ENCODE measurements at regions of chr22 and their contacts with region 1.

Region 1: GRCh38 chr22:27134315-27134701 is 476.9 kb downstream of the MIAT start:
- DNase-seq: no peak
- H3K4me3 ChIP-seq: no peak overlapping the region
- H3K27ac ChIP-seq: no peak overlapping the region
- H3K4me1 ChIP-seq: no peaks in the 10 kb centered on the region
- H3K27me3 ChIP-seq: no peaks in the 10 kb centered on the region
- CTCF ChIP-seq: no peak
- EP300 ChIP-seq: no peak
- POLR2A ChIP-seq: no peak
- RAD21 ChIP-seq: no peak

Region 2: DNA sequence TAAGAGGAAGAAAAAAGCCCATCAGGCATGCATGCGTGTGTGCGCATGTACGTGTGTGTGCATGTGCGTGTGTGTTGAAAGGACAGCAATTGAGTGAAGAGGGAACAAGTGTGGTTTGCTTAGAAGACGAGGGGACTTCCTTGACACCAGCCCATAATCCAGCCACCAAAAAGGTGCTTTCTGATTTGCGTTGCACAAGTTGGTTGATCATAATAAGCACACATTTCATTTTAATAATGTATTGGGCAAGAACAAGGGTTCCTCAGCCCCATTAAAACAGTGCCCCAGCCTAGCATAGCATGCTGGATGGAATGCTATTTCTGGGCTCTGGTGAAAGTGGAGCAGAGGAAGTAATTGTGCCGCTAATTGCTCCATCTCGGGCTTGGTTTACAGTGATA is 16.2 kb after region 1 on chr22:
- CTCF ChIA-PET with region 1: interaction called, 13 read pairs
- POLR2A ChIA-PET with region 1: interaction called, 3 read pairs
- DNase-seq: no peak
- H3K4me3 ChIP-seq: no peak overlapping the region
- H3K27ac ChIP-seq: no peak overlapping the region
- H3K4me1 ChIP-seq: no peaks in the 10 kb centered on the region; a peak in 1 of 7 replicates
- H3K27me3 ChIP-seq: no peaks in the 10 kb centered on the region
- CTCF ChIP-seq: no peak
- EP300 ChIP-seq: no peak
- POLR2A ChIP-seq: no peak
- RAD21 ChIP-seq: no peak

Region 3: DNA sequence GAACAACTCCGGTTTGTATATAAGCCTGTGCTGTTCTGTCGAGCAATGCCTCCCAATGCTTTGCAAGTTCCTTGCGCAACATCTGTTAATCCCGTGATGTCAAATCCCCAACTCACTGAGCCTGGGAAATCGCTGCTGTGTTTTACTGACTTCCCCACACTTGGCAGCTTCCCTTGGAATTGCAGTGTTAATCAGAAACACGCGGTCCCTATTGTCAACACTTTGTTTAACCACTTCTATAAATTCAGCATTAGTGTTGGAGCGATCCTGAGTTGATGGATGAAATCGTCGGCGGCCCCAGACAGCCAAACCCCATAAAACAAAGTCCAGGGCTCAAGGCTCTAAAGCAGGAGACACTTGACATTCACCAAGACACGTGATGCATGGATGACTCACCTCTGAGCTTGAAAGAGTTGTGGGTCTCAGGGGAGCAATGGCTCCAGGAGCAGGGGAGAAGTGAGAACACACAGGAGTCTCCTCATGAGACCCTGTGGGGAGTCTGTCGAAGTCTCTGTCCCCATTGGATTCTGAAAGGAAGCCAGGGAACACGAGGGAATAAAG is 78.4 kb after region 1 on chr22:
- CTCF ChIA-PET with region 1: no interaction called
- POLR2A ChIA-PET with region 1: no interaction called
- DNase-seq: no peak
- H3K4me3 ChIP-seq: no peak overlapping the region
- H3K27ac ChIP-seq: no peak overlapping the region
- H3K4me1 ChIP-seq: peaks cover 0 to 3% (median 0%) of the 10 kb centered on the region in 4 experiments; a peak in 1 of 7 replicates
- H3K27me3 ChIP-seq: peaks cover 0 to 2% (median 0%) of the 10 kb centered on the region in 4 experiments; a peak in 1 of 7 replicates
- CTCF ChIP-seq: no peak
- EP300 ChIP-seq: no peak
- POLR2A ChIP-seq: no peak
- RAD21 ChIP-seq: no peak